ENCODE measurements at regions of chr5 and their contacts with region 1.

Region 1: DNA sequence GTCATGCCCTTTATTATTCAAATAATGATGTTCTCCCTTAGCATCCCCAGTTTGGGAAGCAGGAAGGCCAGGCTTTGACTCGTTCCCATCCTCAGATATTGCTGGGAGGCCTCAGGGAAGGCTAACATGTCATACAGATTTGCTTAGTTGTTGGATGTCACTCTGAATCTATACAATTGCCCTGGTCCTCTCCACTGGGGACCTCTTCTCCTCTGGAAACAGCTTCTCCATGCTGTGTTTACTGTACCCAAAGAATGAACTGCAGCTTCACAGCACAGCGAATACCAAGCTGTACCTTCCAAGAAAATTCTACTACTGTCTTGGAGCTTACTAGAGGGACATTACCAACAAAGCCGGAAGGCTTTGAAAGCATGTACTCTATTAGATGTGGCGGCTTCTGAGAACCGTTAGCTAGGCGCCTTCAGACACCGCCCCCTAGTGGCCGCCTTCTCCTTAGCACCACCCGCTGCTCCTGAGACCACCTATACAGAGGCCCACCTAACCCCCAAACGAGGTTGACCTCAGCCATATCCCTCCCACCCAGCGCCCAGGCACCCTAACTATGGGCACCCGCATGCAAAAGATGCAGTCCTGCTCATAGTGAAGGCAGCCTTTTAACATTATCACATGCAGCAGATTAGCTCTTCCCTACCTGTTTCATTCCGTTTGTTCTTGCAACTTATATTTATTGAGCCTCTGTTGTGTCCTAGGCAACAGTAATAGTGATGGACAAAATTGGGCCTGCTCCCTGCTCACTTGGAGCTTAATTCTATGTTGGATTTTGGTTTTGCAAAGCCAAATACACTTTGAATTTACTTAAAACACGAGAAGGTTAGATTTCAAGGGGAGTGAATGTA is 34.9 kb upstream of the FOXI1 start:
- DNase-seq: no peak
- ATAC-seq: peak; percentile 93
- H3K4me3 ChIP-seq: no peak overlapping the region
- H3K27ac ChIP-seq: no peak overlapping the region
- H3K4me1 ChIP-seq: no peaks in the 10 kb centered on the region
- H3K27me3 ChIP-seq: peaks cover 0 to 1% of the 10 kb centered on the region in 2 experiments; a peak in 1 of 5 replicates
- CTCF ChIP-seq: peak; percentile 73
- EP300 ChIP-seq: no peak
- POLR2A ChIP-seq: no peak
- RAD21 ChIP-seq: no peak

Region 2: GRCh38 chr5:169701910-169702451 is 368.8 kb before region 1 on chr5:
- CTCF ChIA-PET with region 1: no interaction called
- POLR2A ChIA-PET with region 1: no interaction called
- in situ Hi-C with region 1: no loop called
- intact Hi-C with region 1: loop called (anchors 2 kb)
- DNase-seq: no peak
- ATAC-seq: peak; percentile 44; the same call in 1 of the 3 replicates
- H3K4me3 ChIP-seq: no peak overlapping the region
- H3K27ac ChIP-seq: no peak overlapping the region
- H3K4me1 ChIP-seq: no peaks in the 10 kb centered on the region
- H3K27me3 ChIP-seq: no peaks in the 10 kb centered on the region; a peak in 1 of 5 replicates
- CTCF ChIP-seq: peak; percentile 36; the same call in 1 of the 2 replicates
- EP300 ChIP-seq: no peak
- POLR2A ChIP-seq: no peak
- RAD21 ChIP-seq: no peak

Measured in HepG2 (cell line).